Activated CD4-positive, alpha-beta T cell treated with anti-CD3 and anti-CD28 coated beads for 36 hours (primary cell): ENCODE measurements at regions of chr3 and their contacts with region 1.

Region 1: GRCh38 chr3:168213920-168214319 is 118.2 kb upstream of the GOLIM4 start:
- DNase-seq: no peak
- ATAC-seq: no peak
- H3K4me3 Mint-ChIP-seq: no peak overlapping the region
- H3K27ac Mint-ChIP-seq: no peak overlapping the region
- H3K4me1 Mint-ChIP-seq: peaks cover 7% of the 10 kb centered on the region
- H3K27me3 Mint-ChIP-seq: no peaks in the 10 kb centered on the region

Region 2: DNA sequence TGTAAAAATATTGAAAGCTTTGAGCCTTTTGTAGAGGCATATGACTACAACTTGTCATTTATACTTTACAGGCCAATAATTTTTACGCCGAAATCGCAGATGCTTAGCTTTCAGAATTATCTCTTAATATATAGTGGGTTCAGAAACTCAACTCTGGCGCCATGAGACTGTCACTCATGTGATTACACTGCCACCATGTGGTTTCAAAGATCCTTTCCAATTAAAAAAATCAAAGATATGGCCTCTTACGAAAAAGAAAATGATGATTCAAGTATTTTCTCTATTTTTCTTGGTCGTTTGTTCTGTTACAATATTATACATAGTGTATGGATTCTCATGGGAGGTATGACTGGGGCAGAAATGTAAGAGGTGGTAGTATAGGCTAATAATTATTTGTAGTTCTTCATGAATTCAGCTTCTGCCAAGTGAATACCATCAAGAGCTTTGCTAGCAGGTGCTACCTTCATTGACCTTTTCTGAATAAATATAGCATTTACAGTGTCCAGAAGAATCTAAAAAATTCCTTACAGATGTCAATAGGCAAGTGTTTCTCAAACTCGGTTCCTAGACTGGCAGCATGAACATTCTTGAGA is 633.5 kb after region 1 on chr3:
- CTCF ChIA-PET with region 1: interaction called, 16 read pairs
- POLR2A ChIA-PET with region 1: no interaction called
- intact Hi-C with region 1: loop called (anchors 1 kb)
- DNase-seq: peak; percentile 11
- ATAC-seq: no peak
- H3K4me3 Mint-ChIP-seq: no peak overlapping the region
- H3K27ac Mint-ChIP-seq: no peak overlapping the region
- H3K4me1 Mint-ChIP-seq: no peaks in the 10 kb centered on the region
- H3K27me3 Mint-ChIP-seq: peaks cover 17% of the 10 kb centered on the region

Region 3: GRCh38 chr3:169044331-169045113 is 830.6 kb after region 1 on chr3:
- CTCF ChIA-PET with region 1: no interaction called
- POLR2A ChIA-PET with region 1: no interaction called
- intact Hi-C with region 1: no loop called
- DNase-seq: no peak
- ATAC-seq: no peak
- H3K4me3 Mint-ChIP-seq: no peak overlapping the region
- H3K27ac Mint-ChIP-seq: no peak overlapping the region
- H3K4me1 Mint-ChIP-seq: no peaks in the 10 kb centered on the region
- H3K27me3 Mint-ChIP-seq: no peaks in the 10 kb centered on the region

Region 4: DNA sequence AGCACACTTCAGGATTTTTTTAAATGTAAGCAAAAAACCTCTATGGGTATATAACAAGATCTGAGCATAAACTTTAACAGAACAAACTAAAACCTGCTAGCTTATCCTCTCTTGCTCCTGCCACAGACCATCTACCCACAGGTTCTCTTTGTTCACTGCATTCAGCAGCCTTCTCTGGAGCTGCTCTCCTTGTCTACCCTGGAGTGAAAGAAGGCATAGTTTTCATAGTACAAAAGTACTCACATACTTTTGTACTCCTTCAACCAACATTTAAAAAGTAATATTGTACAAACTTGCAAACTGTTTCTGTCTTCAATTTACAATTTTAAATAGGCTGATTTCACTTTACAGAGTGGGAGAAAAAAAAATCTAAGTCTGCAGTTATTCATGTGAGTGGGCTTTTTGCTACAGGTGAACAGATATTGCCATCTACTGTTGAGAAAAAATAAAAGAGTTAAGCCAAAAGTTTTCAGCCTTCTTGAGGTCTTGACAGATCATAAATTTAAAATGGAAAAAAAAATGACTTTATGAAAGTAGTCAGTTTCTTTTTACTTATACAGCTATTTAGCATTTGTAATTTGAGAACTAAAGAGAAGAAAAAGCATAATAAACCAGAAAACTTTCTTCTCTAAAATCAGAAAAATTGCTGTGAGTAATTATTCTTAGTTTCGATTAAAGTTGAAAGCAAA is 1530.6 kb after region 1 on chr3:
- CTCF ChIA-PET with region 1: no interaction called
- POLR2A ChIA-PET with region 1: no interaction called
- intact Hi-C with region 1: loop called in 1 of 2 experiments (anchors 5 kb)
- DNase-seq: no peak
- ATAC-seq: no peak
- H3K4me3 Mint-ChIP-seq: no peak overlapping the region
- H3K27ac Mint-ChIP-seq: no peak overlapping the region
- H3K4me1 Mint-ChIP-seq: peaks cover 16% of the 10 kb centered on the region
- H3K27me3 Mint-ChIP-seq: peaks cover 16% of the 10 kb centered on the region